Activated B cell treated with CpG ODN at 0.5 μM for 24 hours (primary cell): ENCODE measurements at regions of chr13 and their contacts with region 1.

Region 1: GRCh38 chr13:49976314-49977258 is 20.3 kb upstream of the TRIM13 start:
- DNase-seq: peak; percentile 57
- ATAC-seq: peak; percentile 86
- H3K4me3 Mint-ChIP-seq: no peak overlapping the region
- H3K27ac Mint-ChIP-seq: no peak overlapping the region
- H3K4me1 Mint-ChIP-seq: peaks cover 2% of the 10 kb centered on the region
- H3K27me3 Mint-ChIP-seq: no peaks in the 10 kb centered on the region
- CTCF ChIP-seq: no peak

Region 2: GRCh38 chr13:50387051-50387581 is 410.5 kb after region 1 on chr13:
- CTCF ChIA-PET with region 1: interaction called, 4 read pairs
- POLR2A ChIA-PET with region 1: no interaction called
- intact Hi-C with region 1: loop called (anchors 5 kb)
- DNase-seq: peak; percentile 28
- ATAC-seq: peak; percentile 81
- H3K4me3 Mint-ChIP-seq: no peak overlapping the region
- H3K27ac Mint-ChIP-seq: no peak overlapping the region
- H3K4me1 Mint-ChIP-seq: peaks cover 4% of the 10 kb centered on the region
- H3K27me3 Mint-ChIP-seq: no peaks in the 10 kb centered on the region
- CTCF ChIP-seq: no peak

Region 3: GRCh38 chr13:50531917-50532899 is 555.6 kb after region 1 on chr13:
- CTCF ChIA-PET with region 1: interaction called, 6 read pairs
- POLR2A ChIA-PET with region 1: no interaction called
- intact Hi-C with region 1: loop called (anchors 1 kb)
- DNase-seq: no peak
- ATAC-seq: no peak
- H3K4me3 Mint-ChIP-seq: no peak overlapping the region
- H3K27ac Mint-ChIP-seq: no peak overlapping the region
- H3K4me1 Mint-ChIP-seq: peaks cover 15% of the 10 kb centered on the region
- H3K27me3 Mint-ChIP-seq: no peaks in the 10 kb centered on the region
- CTCF ChIP-seq: no peak